Common myeloid progenitor, CD34-positive (primary cell): ENCODE measurements at regions of chr10 and their contacts with region 1.

Region 1: DNA sequence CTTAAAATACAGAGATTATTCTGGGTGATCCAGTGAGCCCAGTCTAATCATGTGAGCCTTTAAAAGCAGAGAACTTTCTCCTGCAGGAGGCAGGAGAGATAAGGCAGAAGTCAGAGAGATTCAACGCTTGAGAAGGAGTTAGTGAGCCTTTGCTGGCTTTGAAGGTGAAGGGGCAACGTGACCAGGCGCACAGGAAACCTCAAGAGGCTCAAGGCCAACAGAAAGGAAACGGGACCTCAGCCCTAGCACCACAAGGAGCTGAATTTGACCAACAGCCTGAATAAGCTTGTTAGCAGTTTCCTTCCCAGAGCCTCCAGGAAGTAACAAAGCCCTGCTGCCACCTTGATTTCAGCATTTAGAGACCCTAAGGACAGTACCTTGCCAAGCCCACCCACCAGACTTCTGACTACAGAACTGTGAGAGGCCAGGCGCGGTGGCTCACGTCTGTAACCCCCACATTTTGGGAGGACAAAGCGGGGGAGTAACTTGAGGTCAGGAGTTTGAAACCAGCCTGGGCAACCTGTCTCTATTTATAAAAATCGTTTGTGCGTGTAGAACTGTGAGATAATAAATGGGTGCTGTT is 87.3 kb upstream of the KAT6B start:
- DNase-seq: peak; percentile 88 to 97 (median 95)
- H3K4me3 ChIP-seq: peak overlapping the region in 6 of 7 experiments; percentile 23 to 53 (median 34)
- H3K27ac ChIP-seq: peak overlapping the region in 1 of 2 experiments; percentile 67
- H3K4me1 ChIP-seq: peaks cover 11 to 38% (median 33%) of the 10 kb centered on the region in 4 experiments
- H3K27me3 ChIP-seq: no peaks in the 10 kb centered on the region

Region 2: DNA sequence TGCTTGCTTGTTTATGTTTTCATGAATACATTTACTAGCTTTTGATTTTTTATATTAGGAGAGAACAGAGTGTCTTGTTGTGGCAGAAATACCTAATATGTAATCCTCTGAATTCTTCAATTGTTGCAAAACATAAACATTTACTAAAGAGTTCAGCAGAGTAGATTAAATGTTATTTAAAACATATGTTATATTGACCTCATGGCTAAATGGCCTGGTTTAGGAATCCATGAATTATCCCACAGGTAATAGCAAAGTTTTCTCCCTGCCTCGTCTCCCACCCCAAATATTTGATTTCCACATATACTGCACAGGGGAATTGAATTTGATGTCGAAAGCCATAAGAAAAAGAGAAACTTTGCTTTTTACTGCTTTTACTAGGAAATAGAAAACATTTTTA is 476.2 kb before region 1 on chr10:
- CTCF ChIA-PET with region 1: interaction called, 10 read pairs
- POLR2A ChIA-PET with region 1: no interaction called
- DNase-seq: no peak
- H3K4me3 ChIP-seq: no peak overlapping the region
- H3K27ac ChIP-seq: no peak overlapping the region
- H3K4me1 ChIP-seq: peaks cover 0 to 3% (median 1%) of the 10 kb centered on the region in 4 experiments
- H3K27me3 ChIP-seq: no peaks in the 10 kb centered on the region

Region 3: GRCh38 chr10:74753442-74754211 is 14.6 kb after region 1 on chr10:
- CTCF ChIA-PET with region 1: interaction called, 12 read pairs
- POLR2A ChIA-PET with region 1: no interaction called
- DNase-seq: no peak
- H3K4me3 ChIP-seq: no peak overlapping the region
- H3K27ac ChIP-seq: no peak overlapping the region
- H3K4me1 ChIP-seq: peaks cover 8 to 34% (median 15%) of the 10 kb centered on the region in 4 experiments
- H3K27me3 ChIP-seq: no peaks in the 10 kb centered on the region

Region 4: GRCh38 chr10:74855027-74855426 is 116.0 kb after region 1 on chr10:
- CTCF ChIA-PET with region 1: no interaction called
- POLR2A ChIA-PET with region 1: no interaction called
- DNase-seq: peak in 2 of 3 donors; percentile 62 to 70
- H3K4me3 ChIP-seq: peak overlapping the region in 1 of 7 experiments; percentile 34
- H3K27ac ChIP-seq: peak overlapping the region; percentile 18 to 74
- H3K4me1 ChIP-seq: peaks cover 13 to 26% (median 19%) of the 10 kb centered on the region in 4 experiments
- H3K27me3 ChIP-seq: no peaks in the 10 kb centered on the region